BJ (cell line): ENCODE measurements at regions of chr15 and their contacts with region 1.

Region 1: DNA sequence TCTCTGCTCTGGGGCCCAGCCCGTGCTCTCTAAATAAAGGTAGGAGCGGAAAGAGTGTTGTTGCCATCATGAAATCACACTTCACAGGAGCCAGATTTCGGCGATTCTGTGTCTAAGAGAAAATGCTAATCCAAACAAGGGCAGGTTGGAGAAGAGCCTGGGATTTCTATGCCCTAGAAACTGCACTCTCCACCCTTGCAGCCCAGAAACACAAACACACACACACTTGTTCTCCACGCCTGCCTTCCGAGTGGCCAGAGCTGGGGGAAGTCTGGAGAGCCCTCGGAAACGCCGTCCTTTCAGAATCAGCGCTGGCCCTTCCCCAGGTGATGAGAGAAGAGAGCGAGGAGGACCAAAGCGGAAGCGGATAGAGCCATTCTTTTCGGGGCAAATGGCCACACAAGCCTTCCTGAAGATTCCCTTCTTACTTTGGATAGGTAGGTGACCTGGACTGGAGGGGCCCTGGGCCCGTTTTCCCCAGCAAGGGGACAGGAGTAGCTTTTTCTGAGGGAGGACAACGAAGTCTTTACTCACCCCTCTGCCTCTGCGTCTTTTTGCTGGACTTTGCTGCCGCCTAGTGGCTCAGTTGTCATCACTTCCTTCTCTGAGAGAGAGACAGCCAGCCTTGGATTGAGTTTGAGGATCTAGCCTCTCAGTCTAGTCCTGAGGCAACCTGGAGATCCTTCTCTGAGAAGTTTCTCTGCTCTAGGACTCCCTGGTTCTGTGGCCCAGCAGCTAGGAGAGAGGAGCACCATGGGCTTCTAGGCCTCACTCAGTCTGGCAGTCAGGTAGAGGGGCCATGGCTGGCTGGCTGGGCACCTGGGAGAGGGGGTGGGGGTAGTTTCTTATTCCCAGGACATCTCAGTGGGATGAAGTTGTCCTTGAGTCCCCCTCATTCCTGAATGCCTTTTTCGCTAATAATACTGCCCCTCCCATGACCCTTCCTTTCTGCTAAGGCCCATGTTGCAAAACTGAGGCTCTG is 37.7 kb downstream of the SENP8 start:
- DNase-seq: peak; percentile 29
- H3K4me3 ChIP-seq: peak overlapping the region; percentile 25
- H3K27me3 ChIP-seq: no peaks in the 10 kb centered on the region
- CTCF ChIP-seq: peak; percentile 84

Region 2: DNA sequence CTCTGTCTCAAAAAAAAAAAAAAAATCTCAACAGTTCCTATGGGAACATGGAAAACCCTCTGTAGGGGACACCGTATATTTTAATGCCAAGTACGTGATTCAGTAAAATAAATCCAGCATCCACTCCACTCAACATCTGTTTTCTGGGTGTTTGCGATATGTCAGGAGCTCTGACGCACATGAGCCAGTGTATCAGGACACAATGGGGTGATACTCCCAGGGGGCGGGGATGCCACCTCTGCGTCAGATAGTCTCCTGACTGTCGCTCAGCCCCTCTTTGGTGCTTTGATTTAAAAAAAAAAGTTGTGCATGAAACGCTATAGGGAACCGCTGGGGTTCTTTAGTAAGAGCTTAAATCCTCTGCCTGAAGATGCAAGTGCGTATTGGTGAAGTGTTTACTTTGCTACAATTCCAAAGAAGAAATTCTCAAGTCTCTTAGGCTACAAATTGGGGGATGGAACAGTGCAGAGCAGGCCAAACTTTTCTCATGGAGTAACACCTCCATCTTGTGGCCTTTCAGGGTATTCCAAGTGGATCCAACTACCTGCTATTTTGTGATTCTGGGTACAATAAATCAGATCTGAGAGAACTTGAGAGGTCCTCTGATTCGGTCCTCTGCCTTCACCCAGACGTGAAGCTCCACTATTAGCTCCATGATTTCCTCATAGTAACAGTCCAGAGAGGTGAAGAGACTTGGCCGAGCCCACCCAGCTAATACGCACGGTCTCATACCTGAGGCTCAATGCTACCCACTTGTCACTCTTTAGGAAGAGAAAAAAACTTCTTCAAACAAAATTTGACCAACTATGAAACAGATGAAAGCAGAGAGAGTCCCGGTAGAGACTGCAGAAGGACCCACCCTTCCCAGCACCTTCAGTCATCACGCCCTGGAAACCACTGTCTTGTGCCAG is 354.8 kb before region 1 on chr15:
- CTCF ChIA-PET with region 1: interaction called, 17 read pairs
- POLR2A ChIA-PET with region 1: no interaction called
- DNase-seq: no peak
- H3K4me3 ChIP-seq: no peak overlapping the region
- H3K27me3 ChIP-seq: no peaks in the 10 kb centered on the region
- CTCF ChIP-seq: peak; percentile 83

Region 3: GRCh38 chr15:72011302-72011942 is 144.5 kb before region 1 on chr15:
- CTCF ChIA-PET with region 1: no interaction called
- POLR2A ChIA-PET with region 1: no interaction called
- DNase-seq: no peak
- H3K4me3 ChIP-seq: no peak overlapping the region
- H3K27me3 ChIP-seq: no peaks in the 10 kb centered on the region
- CTCF ChIP-seq: no peak

Region 4: GRCh38 chr15:72124218-72124617 is 31.7 kb before region 1 on chr15:
- CTCF ChIA-PET with region 1: no interaction called
- POLR2A ChIA-PET with region 1: no interaction called
- DNase-seq: no peak
- H3K4me3 ChIP-seq: no peak overlapping the region
- H3K27me3 ChIP-seq: no peaks in the 10 kb centered on the region
- CTCF ChIP-seq: no peak

Region 5: DNA sequence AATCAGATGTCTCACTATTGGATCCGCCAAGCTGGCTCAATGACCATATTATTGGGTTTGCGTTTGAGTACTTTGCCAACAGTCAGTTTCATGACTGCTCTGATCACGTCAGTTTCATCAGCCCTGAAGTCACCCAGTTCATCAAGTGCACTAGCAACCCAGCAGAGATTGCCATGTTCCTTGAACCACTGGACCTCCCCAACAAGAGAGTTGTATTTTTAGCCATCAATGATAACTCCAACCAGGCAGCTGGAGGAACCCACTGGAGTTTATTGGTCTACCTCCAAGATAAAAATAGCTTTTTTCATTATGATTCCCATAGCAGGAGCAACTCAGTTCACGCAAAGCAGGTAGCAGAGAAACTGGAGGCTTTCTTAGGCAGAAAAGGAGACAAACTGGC is 16.3 kb before region 1 on chr15:
- CTCF ChIA-PET with region 1: interaction called, 11 read pairs
- POLR2A ChIA-PET with region 1: no interaction called
- DNase-seq: no peak
- H3K4me3 ChIP-seq: no peak overlapping the region
- H3K27me3 ChIP-seq: no peaks in the 10 kb centered on the region
- CTCF ChIP-seq: no peak

Region 6: GRCh38 chr15:72168111-72168808 is 12.3 kb after region 1 on chr15:
- CTCF ChIA-PET with region 1: interaction called, 18 read pairs
- POLR2A ChIA-PET with region 1: interaction called, 3 read pairs
- DNase-seq: no peak
- H3K4me3 ChIP-seq: no peak overlapping the region
- H3K27me3 ChIP-seq: peaks cover 6% of the 10 kb centered on the region
- CTCF ChIP-seq: no peak

Region 7: GRCh38 chr15:72197460-72198409 is 41.8 kb after region 1 on chr15 and contains the start of gene GRAMD2A:
- CTCF ChIA-PET with region 1: no interaction called
- POLR2A ChIA-PET with region 1: no interaction called
- DNase-seq: no peak
- H3K4me3 ChIP-seq: peak within 1 kb of the TSS; percentile 20; the same call in 1 of the 2 replicates
- H3K27me3 ChIP-seq: no peaks in the 10 kb centered on the region
- CTCF ChIP-seq: no peak
- polyA plus RNA-seq, gene GRAMD2A: 0.17 and 0.21 TPM in 2 replicates

Region 8: GRCh38 chr15:72306211-72306785 is 150.4 kb after region 1 on chr15:
- CTCF ChIA-PET with region 1: no interaction called
- POLR2A ChIA-PET with region 1: no interaction called
- DNase-seq: no peak
- H3K4me3 ChIP-seq: no peak overlapping the region
- H3K27me3 ChIP-seq: no peaks in the 10 kb centered on the region; the same call in 1 of the 2 replicates
- CTCF ChIP-seq: no peak